Activated CD8-positive, alpha-beta memory T cell treated with anti-CD3 and anti-CD28 coated beads, Interleukin-2, amount 10 ng/mL, durations not matched to agents 7 days and 5 days (primary cell): ENCODE measurements at regions of chr9 and their contacts with region 1.

Region 1: GRCh38 chr9:99173570-99174504 is 47.9 kb downstream of the ALG2 start:
- DNase-seq: no peak
- ATAC-seq: peak; percentile 57
- H3K4me3 Mint-ChIP-seq: no peak overlapping the region
- H3K27ac Mint-ChIP-seq: no peak overlapping the region
- H3K4me1 Mint-ChIP-seq: peaks cover 33% of the 10 kb centered on the region
- H3K27me3 Mint-ChIP-seq: no peaks in the 10 kb centered on the region

Region 2: DNA sequence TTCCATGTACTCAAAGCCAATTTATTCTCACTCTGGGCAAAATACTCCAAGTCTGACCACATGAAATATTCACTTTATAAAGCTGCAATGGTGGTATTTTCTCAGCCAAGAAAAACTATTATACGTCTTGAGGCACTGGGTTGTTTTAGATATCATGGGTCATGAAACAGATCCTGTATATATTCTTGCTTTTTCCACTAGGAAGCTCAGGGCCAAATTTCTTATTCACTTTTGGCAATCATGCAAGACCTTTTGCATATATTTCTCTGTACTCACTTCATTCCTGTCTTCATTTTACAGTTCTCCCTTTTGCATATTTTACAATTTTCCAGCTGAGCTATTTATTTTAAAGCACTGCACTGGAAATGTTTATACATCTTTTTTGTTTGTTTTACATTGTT is 514.9 kb before region 1 on chr9:
- CTCF ChIA-PET with region 1: no interaction called
- DNase-seq: no peak
- ATAC-seq: no peak
- H3K4me3 Mint-ChIP-seq: no peak overlapping the region
- H3K27ac Mint-ChIP-seq: no peak overlapping the region
- H3K4me1 Mint-ChIP-seq: no peaks in the 10 kb centered on the region
- H3K27me3 Mint-ChIP-seq: peaks cover 14% of the 10 kb centered on the region

Region 3: GRCh38 chr9:99076483-99077171 is 97.2 kb before region 1 on chr9:
- CTCF ChIA-PET with region 1: no interaction called
- DNase-seq: peak; percentile 82
- ATAC-seq: peak; percentile 95
- H3K4me3 Mint-ChIP-seq: peak overlapping the region; percentile 1
- H3K27ac Mint-ChIP-seq: peak overlapping the region; percentile 95
- H3K4me1 Mint-ChIP-seq: peaks cover 41% of the 10 kb centered on the region
- H3K27me3 Mint-ChIP-seq: no peaks in the 10 kb centered on the region

Region 4: GRCh38 chr9:99092643-99093491 is 81.0 kb before region 1 on chr9:
- CTCF ChIA-PET with region 1: no interaction called
- DNase-seq: peak; percentile 91
- ATAC-seq: peak; percentile 89
- H3K4me3 Mint-ChIP-seq: peak overlapping the region; percentile 57
- H3K27ac Mint-ChIP-seq: peak overlapping the region; percentile 99
- H3K4me1 Mint-ChIP-seq: peaks cover 69% of the 10 kb centered on the region
- H3K27me3 Mint-ChIP-seq: no peaks in the 10 kb centered on the region

Region 5: GRCh38 chr9:99162759-99163364 is 11.0 kb before region 1 on chr9:
- CTCF ChIA-PET with region 1: interaction called, 10 read pairs
- DNase-seq: no peak
- ATAC-seq: peak; percentile 40
- H3K4me3 Mint-ChIP-seq: no peak overlapping the region
- H3K27ac Mint-ChIP-seq: no peak overlapping the region
- H3K4me1 Mint-ChIP-seq: peaks cover 53% of the 10 kb centered on the region
- H3K27me3 Mint-ChIP-seq: peaks cover 8% of the 10 kb centered on the region